Esophagus squamous epithelium (tissue), 5 donors: ENCODE measurements at regions of chr1 and their contacts with region 1.

Region 1: GRCh38 chr1:235415008-235415904 is 48.0 kb downstream of the TBCE start:
- DNase-seq: no peak
- H3K4me3 ChIP-seq: no peak overlapping the region
- H3K27ac ChIP-seq: no peak overlapping the region
- H3K4me1 ChIP-seq: peaks cover 0 to 15% (median 0%) of the 10 kb centered on the region in 3 donors
- H3K27me3 ChIP-seq: no peaks in the 10 kb centered on the region
- CTCF ChIP-seq: peak; percentile 67 to 82 (median 77)
- POLR2A ChIP-seq: no peak

Region 2: DNA sequence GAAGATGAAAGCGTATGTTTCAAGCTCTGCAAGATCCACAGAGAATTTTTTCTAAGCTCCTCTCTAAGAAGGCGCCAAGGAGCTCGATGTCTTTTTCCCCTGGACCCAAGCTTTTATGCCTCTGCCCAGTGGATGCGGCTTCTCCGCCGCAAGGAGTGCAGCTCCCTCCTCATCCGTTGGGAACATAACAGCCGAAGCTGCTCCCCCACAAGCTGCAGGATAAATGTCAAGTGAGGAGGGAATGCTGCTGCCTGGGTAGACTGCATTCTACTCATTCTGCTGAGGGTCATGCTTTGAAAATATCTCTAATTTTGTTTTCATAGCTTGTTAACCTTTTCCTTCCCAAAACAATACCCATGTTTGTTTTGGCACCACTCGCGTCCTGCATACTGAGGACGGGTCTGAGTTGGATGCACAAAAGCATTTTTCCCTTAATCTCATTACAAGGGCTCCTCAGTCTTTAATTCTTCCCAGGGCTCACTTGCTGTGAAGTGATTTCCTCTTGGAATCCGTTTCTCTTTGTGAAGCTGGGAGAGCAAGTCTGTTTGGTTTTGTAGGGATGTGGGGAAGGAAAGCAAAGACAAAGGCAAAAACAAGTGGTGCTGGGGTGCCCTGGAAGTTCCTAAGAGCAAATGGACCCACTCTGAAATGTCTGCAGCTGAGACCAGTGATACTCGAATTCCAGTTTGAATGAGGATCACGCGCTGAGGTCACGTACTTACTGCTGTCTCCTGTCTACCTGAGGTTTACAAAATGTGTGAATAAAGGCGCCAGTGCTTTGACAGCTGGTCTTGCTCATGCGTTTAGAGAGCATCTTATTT is 671.3 kb before region 1 on chr1:
- intact Hi-C with region 1: no loop called
- DNase-seq: no peak
- H3K4me3 ChIP-seq: peak overlapping the region in 1 of 4 donors; percentile 46
- H3K27ac ChIP-seq: peak overlapping the region in 3 of 4 donors; percentile 50 to 63 (median 63)
- H3K4me1 ChIP-seq: peaks cover 9 to 37% (median 23%) of the 10 kb centered on the region in 3 donors
- H3K27me3 ChIP-seq: no peaks in the 10 kb centered on the region
- CTCF ChIP-seq: no peak
- POLR2A ChIP-seq: no peak

Region 3: GRCh38 chr1:235093696-235094592 is 321.3 kb before region 1 on chr1:
- intact Hi-C with region 1: no loop called
- DNase-seq: no peak
- H3K4me3 ChIP-seq: peak overlapping the region in 2 of 4 donors; percentile 3 to 33
- H3K27ac ChIP-seq: no peak overlapping the region
- H3K4me1 ChIP-seq: peaks cover 9 to 14% (median 9%) of the 10 kb centered on the region in 3 donors
- H3K27me3 ChIP-seq: no peaks in the 10 kb centered on the region
- CTCF ChIP-seq: peak; percentile 76 to 93 (median 84)
- POLR2A ChIP-seq: no peak

Region 4: DNA sequence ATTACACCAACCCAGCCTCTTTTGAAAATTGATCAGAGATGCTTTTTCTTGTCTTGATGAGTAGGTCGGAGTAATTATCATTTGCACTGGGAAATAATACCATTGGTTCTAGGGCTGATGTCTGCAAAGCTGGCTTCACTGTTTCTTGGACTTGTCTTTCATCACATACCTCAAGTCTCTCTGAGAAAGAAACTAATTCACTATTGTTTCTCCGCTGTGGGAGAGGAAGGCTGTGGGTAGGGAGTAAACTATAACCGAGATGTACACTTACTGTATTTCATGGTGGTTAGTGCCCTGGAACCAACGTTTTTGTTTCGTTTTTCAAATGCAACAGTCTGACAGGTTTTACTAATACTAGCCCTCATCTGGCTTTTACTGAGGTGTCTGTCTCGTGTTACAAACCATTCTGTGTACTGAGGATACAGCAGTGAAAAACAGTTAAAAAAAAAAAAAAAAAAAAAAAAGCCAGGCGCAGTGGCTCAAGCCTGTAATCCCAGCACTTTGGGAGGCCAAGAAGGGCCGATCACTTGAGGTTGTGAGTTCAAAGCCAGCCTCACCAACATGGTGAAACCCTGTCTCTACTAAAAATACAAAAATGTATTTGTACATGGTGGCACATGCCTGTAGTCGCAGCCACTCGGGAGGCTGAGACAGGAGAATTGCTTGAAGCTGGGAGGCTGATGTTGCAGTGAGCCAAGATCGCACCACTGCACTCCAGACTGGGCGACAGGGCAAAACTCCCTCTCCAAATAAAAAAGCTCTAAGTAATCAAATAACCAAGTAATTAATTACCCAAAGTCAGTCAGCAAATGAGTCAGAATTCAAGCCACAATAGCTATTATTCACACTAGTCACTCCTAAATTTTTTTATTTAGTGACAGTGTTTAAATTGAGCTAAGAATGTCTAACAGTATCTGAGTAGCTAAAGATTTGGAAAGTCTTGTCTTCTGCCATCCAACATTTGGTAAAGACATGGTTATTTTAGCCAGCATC is 309.9 kb before region 1 on chr1:
- intact Hi-C with region 1: loop called (anchors 10 kb)
- DNase-seq: no peak
- H3K4me3 ChIP-seq: peak overlapping the region in 1 of 4 donors; percentile 18
- H3K27ac ChIP-seq: peak overlapping the region in 1 of 4 donors; percentile 1
- H3K4me1 ChIP-seq: peaks cover 0 to 45% (median 18%) of the 10 kb centered on the region in 3 donors
- H3K27me3 ChIP-seq: no peaks in the 10 kb centered on the region
- CTCF ChIP-seq: no peak
- POLR2A ChIP-seq: no peak

Region 5: DNA sequence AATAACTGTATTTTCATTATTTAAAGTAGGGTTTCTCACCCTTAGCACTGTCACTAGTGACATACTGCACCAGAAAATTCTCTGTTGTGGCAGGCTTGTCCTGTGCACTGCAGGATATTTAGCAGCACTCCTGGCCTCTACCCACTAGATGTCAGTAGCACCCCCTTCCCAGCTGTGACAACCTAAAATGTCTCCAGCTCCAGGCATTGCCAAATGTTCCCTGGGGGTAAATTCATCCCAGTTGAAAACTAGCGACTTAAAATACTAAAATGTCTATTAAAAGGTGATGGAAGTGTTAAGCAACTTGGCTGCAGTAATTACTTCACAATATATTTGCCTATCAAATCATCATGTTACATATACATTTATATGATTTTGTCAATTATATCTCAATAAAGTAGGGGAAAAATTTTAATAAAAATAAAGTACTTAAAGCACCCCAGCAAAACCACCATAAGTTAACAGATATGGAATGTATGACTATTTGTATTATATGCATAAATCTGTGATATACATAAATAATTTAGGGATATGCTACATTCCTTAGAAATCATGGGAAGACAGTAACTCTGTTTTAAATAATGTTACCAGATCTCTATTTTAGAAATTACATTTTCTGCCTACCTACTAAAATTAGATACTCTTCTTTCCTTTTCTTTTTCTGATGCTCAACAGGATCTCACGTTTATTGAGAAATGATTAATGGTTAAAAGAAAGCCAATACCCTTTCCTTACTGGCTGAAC is 161.9 kb before region 1 on chr1:
- intact Hi-C with region 1: loop called (anchors 5 kb)
- DNase-seq: no peak
- H3K4me3 ChIP-seq: no peak overlapping the region
- H3K27ac ChIP-seq: no peak overlapping the region
- H3K4me1 ChIP-seq: peaks cover 0 to 14% (median 0%) of the 10 kb centered on the region in 3 donors
- H3K27me3 ChIP-seq: no peaks in the 10 kb centered on the region
- CTCF ChIP-seq: peak; percentile 69 to 86 (median 78)
- POLR2A ChIP-seq: no peak

Region 6: DNA sequence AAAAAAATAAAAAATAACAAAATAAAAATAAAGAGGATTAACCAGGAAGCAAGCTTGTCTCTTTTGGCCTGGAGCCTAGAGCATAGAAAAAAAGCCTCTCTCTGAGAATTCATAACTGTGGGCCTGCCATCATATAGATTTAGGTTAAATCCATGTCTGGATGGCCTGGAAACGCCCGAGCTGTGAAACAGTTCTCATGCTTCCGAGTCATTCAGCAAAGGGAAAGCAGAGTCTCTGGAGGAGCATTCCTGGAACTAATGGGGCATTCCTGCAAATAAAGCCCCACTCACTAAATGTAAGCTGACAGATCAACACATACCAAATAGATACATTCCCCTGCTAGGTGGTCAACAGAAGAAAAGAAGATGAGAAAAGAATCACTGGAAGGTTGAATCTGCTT is 310.2 kb after region 1 on chr1:
- intact Hi-C with region 1: no loop called
- DNase-seq: no peak
- H3K4me3 ChIP-seq: no peak overlapping the region
- H3K27ac ChIP-seq: peak overlapping the region in 2 of 4 donors; percentile 28 to 68
- H3K4me1 ChIP-seq: peaks cover 0 to 13% (median 0%) of the 10 kb centered on the region in 3 donors
- H3K27me3 ChIP-seq: no peaks in the 10 kb centered on the region
- CTCF ChIP-seq: no peak
- POLR2A ChIP-seq: no peak